ENCODE measurements at regions of chr1 and their contacts with region 1.

Region 1: DNA sequence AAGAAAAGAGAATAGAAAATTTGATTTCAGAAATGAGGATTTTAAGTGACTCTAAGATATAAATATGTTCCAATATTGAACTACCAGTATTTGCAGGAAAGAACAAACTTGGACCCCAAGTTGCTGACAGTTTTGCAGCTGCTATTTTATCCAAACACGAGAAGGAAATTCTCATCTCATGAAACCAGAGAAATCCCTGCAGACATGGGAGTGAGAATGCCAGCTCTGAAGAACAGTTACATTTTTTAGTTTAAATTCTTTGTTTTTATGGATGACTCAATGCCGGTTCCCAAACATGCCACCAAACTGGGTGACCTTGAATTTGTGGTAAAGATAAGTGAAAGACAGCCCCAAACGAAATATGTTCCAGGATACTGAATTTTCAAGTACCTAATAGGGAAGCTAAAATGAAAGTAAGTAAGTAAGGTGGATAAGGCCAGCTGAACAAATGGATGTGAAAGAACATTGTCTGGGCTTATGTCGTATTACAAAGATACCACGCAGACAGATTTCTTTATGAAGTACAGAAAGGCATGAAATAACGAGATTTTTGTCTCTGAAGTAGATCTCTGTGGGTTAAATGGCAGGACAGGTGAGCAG is 19.9 kb downstream of the TLR5 start:
- DNase-seq: no peak
- ATAC-seq: no peak
- H3K4me3 ChIP-seq: no peak overlapping the region
- H3K27ac ChIP-seq: no peak overlapping the region
- H3K4me1 ChIP-seq: no peaks in the 10 kb centered on the region
- H3K27me3 ChIP-seq: no peaks in the 10 kb centered on the region; a peak in 1 of 4 replicates
- CTCF ChIP-seq: no peak
- EP300 ChIP-seq: no peak
- POLR2A ChIP-seq: no peak
- RAD21 ChIP-seq: no peak

Region 2: DNA sequence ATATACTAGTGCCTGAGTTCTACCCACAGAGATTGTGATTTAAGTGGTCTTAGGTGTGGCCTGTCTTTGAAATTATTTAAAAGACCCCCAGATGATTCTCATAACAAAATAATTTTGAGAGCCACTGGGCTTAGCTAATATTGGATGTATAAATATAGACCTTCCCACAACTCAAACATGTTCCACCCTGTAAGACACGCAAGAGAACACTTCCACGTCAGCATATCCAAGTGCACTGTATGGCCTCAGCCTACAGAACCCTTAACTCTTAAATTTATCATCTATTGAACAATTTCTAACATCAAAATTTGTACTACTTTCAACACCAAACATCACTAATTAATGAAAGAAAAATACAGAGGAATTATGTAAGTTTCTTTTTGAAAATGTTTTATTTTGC is 383.6 kb before region 1 on chr1:
- CTCF ChIA-PET with region 1: interaction called, 12 read pairs
- POLR2A ChIA-PET with region 1: no interaction called
- RAD21 ChIA-PET with region 1: interaction called, 10 read pairs
- SMC1A ChIA-PET with region 1: interaction called, 7 read pairs
- in situ Hi-C with region 1: no loop called
- intact Hi-C with region 1: no loop called
- DNase-seq: no peak
- ATAC-seq: no peak
- H3K4me3 ChIP-seq: no peak overlapping the region
- H3K27ac ChIP-seq: no peak overlapping the region
- H3K4me1 ChIP-seq: no peaks in the 10 kb centered on the region
- H3K27me3 ChIP-seq: no peaks in the 10 kb centered on the region
- CTCF ChIP-seq: no peak
- EP300 ChIP-seq: no peak
- POLR2A ChIP-seq: no peak
- RAD21 ChIP-seq: no peak

Region 3: DNA sequence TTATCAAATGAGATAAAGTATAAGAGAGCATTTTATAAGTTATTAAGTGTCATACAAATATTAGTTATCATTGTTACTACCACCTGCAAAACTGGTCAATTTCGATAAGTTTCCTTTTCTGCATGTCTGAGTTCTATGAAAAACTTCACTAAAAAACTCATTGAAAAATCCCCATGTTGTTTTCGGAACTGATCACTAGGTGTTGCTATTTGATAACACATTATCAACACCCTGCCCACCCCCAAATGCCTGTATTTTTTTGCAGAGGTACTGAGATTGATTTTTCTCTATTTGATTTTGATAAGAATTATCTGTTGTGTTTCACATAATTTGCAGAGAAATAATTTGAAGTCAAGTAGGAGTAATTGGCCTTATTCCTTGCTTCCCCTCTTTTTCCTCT is 330.4 kb before region 1 on chr1:
- CTCF ChIA-PET with region 1: interaction called, 8 read pairs
- POLR2A ChIA-PET with region 1: no interaction called
- RAD21 ChIA-PET with region 1: no interaction called
- SMC1A ChIA-PET with region 1: no interaction called
- in situ Hi-C with region 1: no loop called
- intact Hi-C with region 1: loop called (anchors 2 kb)
- DNase-seq: no peak
- ATAC-seq: 0 out of 3 replicates have a peak, but pooled peaks have one; percentile 29
- H3K4me3 ChIP-seq: no peak overlapping the region
- H3K27ac ChIP-seq: no peak overlapping the region
- H3K4me1 ChIP-seq: no peaks in the 10 kb centered on the region
- H3K27me3 ChIP-seq: no peaks in the 10 kb centered on the region; a peak in 1 of 4 replicates
- CTCF ChIP-seq: peak; percentile 19 to 51 (median 32); a peak in 3 of 6 replicates
- EP300 ChIP-seq: no peak
- POLR2A ChIP-seq: no peak
- RAD21 ChIP-seq: peak; percentile 75

Region 4: DNA sequence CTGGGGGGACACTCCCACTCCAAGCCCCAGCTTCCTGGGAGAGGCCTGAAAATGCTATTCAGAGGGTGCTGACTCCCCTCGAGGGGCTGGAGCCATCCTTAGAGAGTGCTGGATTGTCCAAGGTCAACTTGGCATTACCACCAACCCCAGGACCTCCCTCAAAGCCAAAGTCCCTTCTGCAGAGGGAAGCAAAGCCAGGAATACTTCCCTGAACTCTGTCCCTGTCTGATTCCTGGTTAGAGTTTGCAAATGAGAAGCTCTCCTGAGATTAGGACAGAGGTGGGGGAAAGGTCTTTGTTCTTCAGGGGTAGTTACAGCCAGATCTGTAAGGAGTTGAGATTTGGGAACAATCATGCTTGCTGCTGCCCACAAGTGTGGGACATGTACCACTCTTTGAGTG is 25.4 kb before region 1 on chr1:
- CTCF ChIA-PET with region 1: interaction called, 21 read pairs
- POLR2A ChIA-PET with region 1: no interaction called
- RAD21 ChIA-PET with region 1: no interaction called
- SMC1A ChIA-PET with region 1: no interaction called
- in situ Hi-C with region 1: no loop called
- intact Hi-C with region 1: no loop called
- DNase-seq: no peak
- ATAC-seq: no peak
- H3K4me3 ChIP-seq: no peak overlapping the region
- H3K27ac ChIP-seq: no peak overlapping the region
- H3K4me1 ChIP-seq: no peaks in the 10 kb centered on the region
- H3K27me3 ChIP-seq: no peaks in the 10 kb centered on the region; a peak in 1 of 4 replicates
- CTCF ChIP-seq: no peak
- EP300 ChIP-seq: no peak
- POLR2A ChIP-seq: no peak
- RAD21 ChIP-seq: no peak

Region 5: DNA sequence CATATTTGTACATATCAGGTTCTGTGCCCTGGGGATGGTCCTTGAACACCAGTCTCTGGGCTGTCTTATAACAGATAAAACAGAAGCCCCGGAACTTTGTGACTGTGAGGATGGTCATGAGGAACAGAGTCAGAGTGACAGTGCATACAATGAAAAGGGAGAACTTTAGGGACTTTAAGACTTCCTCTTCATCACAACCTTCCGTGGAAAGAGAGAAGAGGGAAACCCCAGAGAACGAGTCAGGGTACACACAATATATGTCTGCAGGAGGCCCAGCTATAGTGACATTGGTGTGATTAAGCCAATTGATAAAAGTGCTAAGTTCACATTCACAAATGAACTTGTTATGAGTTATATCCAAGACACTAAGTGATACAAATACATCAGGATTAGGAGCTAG is 12.2 kb before region 1 on chr1:
- CTCF ChIA-PET with region 1: interaction called, 27 read pairs
- POLR2A ChIA-PET with region 1: no interaction called
- RAD21 ChIA-PET with region 1: interaction called, 4 read pairs
- SMC1A ChIA-PET with region 1: interaction called, 6 read pairs
- in situ Hi-C with region 1: no loop called
- intact Hi-C with region 1: no loop called
- DNase-seq: no peak
- ATAC-seq: no peak
- H3K4me3 ChIP-seq: no peak overlapping the region
- H3K27ac ChIP-seq: no peak overlapping the region
- H3K4me1 ChIP-seq: no peaks in the 10 kb centered on the region
- H3K27me3 ChIP-seq: peaks cover 0 to 6% of the 10 kb centered on the region in 2 experiments; a peak in 3 of 4 replicates
- CTCF ChIP-seq: no peak
- EP300 ChIP-seq: no peak
- POLR2A ChIP-seq: no peak
- RAD21 ChIP-seq: no peak

Region 6: DNA sequence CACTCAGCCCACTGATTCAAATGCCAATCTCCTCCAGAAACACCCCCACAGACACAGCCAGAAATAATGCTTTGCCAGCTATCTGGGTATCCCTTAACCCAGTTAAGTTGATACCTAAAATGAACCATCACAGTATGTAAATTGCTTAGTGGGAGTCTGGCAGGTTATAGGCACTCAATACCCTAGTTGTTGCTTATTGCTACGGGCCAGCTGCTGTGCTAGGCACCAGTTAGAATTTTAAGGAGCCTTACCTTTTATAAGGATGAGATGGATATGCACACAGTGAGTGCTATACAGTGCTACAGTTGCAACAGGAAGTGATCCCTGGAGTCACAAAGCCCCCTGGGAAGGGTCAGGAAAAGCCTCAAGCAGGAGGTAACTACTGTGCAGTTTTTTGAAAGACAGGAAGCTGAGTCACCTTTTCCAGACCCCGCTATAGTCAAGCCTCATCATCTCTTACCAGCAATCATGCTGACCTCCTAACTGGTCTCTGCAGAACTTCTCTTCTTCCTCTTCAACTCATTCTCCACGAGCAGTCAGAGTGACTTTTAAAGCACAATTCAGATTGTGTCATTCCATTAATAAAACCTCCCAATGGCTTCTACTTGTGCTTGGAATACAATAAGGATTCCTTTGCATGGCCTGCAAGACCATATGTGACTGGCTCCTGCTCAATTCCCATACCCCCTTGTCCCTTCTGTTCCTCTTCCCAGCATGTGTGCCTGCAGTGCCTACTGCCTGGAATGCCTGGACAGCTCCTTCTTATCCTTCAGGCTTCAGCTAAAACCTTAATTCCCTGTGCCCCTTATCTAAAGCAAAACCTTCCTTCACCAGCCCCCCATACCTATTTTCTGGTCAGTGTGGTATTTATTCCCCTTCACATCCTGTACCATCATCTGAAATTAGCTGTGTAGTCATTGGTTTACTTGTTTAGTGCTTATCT is 30.3 kb after region 1 on chr1:
- CTCF ChIA-PET with region 1: interaction called, 12 read pairs
- POLR2A ChIA-PET with region 1: no interaction called
- RAD21 ChIA-PET with region 1: no interaction called
- SMC1A ChIA-PET with region 1: no interaction called
- in situ Hi-C with region 1: no loop called
- intact Hi-C with region 1: no loop called
- DNase-seq: no peak
- ATAC-seq: peak; percentile 28; the same call in 2 of the 3 replicates
- H3K4me3 ChIP-seq: no peak overlapping the region
- H3K27ac ChIP-seq: no peak overlapping the region
- H3K4me1 ChIP-seq: no peaks in the 10 kb centered on the region
- H3K27me3 ChIP-seq: no peaks in the 10 kb centered on the region
- CTCF ChIP-seq: no peak
- EP300 ChIP-seq: no peak
- POLR2A ChIP-seq: no peak
- RAD21 ChIP-seq: no peak